ENCODE measurements at regions of chr10 and their contacts with region 1.

Region 1: DNA sequence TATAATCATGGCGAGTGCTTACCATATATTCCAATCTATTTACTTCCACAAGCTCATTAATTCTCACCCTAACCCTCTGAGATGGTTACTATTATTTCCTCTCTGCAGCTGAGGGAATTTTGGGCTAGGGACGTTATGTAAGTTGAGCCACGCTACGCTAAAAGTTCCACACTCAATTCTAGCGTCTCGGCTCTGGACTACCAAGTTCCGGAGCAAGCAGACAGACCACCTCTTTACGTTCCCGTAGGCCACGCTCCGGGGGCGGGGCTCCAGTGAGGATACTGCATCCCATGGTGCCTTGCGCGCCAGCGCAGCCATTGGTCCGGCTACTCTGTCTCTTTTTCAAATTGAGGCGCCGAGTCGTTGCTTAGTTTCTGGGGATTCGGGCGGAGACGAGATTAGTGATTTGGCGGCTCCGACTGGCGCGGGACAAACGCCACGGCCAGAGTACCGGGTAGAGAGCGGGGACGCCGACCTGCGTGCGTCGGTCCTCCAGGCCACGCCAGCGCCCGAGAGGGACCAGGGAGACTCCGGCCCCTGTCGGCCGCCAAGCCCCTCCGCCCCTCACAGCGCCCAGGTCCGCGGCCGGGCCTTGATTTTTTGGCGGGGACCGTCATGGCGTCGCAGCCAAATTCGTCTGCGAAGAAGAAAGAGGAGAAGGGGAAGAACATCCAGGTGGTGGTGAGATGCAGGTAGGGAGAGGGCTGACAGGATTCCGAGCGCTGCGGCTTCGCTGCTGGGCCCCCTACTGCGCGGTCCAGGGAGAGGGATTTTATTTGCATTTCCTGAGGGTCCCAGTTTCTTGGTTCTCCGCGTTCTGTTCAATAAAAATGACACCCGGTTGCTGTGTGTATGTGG is at the start of gene KIF11:
- DNase-seq: peak; percentile 97 to 99 (median 98)
- ATAC-seq: peak; percentile 96 to 97 (median 96)
- H3K4me3 ChIP-seq: peak within 1 kb of the TSS; percentile 35 to 94 (median 69)
- H3K27ac ChIP-seq: peak within 1 kb of the TSS; percentile 75 to 97 (median 93)
- H3K4me1 ChIP-seq: peaks cover 0 to 29% (median 12%) of the 10 kb centered on the region in 12 donors
- H3K27me3 ChIP-seq: no peaks in the 10 kb centered on the region
- CTCF ChIP-seq: peak in 1 of 12 donors; percentile 11
- POLR2A ChIP-seq: peak in 1 of 2 donors; percentile 80
- total RNA-seq, gene KIF11: 0.13 to 7.0 (median 0.76) TPM

Region 2: DNA sequence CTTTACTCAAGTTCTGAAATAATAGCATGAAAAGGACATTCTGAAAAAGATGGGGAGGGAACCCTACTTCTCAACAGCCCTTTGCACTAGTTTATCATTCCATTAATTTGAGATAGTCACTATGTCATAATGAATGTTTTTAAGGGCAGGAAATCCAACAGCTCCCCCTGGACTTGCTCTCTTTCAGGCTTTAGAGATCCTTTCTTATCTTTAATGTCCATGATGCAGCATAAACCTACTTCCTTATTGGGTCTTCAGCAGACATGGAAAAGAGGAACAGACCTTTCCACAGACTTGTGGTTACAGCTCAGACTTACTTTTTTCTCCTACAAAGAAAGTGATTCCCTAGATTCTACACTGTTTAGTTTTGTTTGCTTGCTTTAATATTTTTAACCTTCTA is 106.4 kb before region 1 on chr10:
- intact Hi-C with region 1: no loop called
- DNase-seq: no peak
- ATAC-seq: no peak
- H3K4me3 ChIP-seq: no peak overlapping the region
- H3K27ac ChIP-seq: peak overlapping the region in 1 of 12 donors; percentile 6
- H3K4me1 ChIP-seq: peaks cover 0 to 12% (median 0%) of the 10 kb centered on the region in 12 donors
- H3K27me3 ChIP-seq: no peaks in the 10 kb centered on the region
- CTCF ChIP-seq: no peak
- POLR2A ChIP-seq: no peak

Region 3: GRCh38 chr10:92657024-92657423 is 64.0 kb after region 1 on chr10:
- intact Hi-C with region 1: no loop called
- DNase-seq: no peak
- ATAC-seq: no peak
- H3K4me3 ChIP-seq: no peak overlapping the region
- H3K27ac ChIP-seq: no peak overlapping the region
- H3K4me1 ChIP-seq: no peaks in the 10 kb centered on the region
- H3K27me3 ChIP-seq: no peaks in the 10 kb centered on the region
- CTCF ChIP-seq: no peak
- POLR2A ChIP-seq: no peak

Region 4: DNA sequence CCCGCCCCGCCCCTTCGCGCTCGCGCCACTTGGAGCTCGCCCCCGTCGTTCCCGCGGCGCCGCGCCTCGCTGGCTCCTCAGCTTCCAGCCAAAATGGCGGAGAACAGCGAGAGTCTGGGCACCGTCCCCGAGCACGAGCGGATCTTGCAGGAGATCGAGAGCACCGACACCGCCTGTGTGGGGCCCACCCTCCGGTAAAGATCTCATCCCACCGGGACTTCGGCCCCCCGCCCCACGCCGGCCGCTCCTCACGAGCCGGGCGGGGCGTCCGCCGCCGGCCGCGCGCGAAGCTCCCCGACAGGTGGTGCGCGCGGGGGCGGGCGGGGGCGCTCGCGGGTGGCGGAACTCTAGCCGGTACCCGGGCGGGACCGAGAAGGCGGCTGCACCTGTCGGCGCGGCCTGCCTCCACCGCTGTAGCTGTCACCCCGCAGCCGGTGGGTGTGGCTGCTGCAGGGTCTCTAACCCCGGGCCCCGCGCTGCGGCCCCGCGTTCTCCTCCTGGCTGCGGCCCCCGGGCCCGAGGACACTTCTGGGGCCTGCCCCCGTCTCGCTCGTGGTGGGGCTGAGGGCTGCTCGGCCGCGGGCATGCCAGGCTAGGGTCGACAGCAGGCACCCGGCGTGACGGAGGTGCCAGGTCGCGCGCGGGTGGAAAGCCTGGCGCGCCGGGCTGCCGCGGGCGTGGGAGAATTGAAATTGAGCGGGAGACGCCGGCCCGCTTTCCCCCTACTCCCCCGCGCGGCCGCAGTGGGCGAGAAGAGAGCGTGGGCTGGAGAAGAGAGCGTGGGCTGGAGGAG is 255.6 kb after region 1 on chr10 and contains the start of gene EXOC6:
- intact Hi-C with region 1: loop called in 3 of 10 experiments (anchors 10 kb)
- DNase-seq: peak; percentile 85 to 91 (median 87)
- ATAC-seq: peak; percentile 69 to 93 (median 90)
- H3K4me3 ChIP-seq: peak within 1 kb of the TSS; percentile 71 to 100 (median 98)
- H3K27ac ChIP-seq: peak within 1 kb of the TSS; percentile 79 to 95 (median 90)
- H3K4me1 ChIP-seq: peaks cover 0 to 42% (median 10%) of the 10 kb centered on the region in 12 donors
- H3K27me3 ChIP-seq: no peaks in the 10 kb centered on the region
- CTCF ChIP-seq: peak in 5 of 12 donors; percentile 7 to 29 (median 13)
- POLR2A ChIP-seq: no peak
- total RNA-seq, gene EXOC6: 7.8 to 12.3 (median 10.0) TPM

Measured in heart left ventricle (tissue), 16 donors.